WTC11 (cell line): ENCODE measurements at regions of chr2 and their contacts with region 1.

Region 1: DNA sequence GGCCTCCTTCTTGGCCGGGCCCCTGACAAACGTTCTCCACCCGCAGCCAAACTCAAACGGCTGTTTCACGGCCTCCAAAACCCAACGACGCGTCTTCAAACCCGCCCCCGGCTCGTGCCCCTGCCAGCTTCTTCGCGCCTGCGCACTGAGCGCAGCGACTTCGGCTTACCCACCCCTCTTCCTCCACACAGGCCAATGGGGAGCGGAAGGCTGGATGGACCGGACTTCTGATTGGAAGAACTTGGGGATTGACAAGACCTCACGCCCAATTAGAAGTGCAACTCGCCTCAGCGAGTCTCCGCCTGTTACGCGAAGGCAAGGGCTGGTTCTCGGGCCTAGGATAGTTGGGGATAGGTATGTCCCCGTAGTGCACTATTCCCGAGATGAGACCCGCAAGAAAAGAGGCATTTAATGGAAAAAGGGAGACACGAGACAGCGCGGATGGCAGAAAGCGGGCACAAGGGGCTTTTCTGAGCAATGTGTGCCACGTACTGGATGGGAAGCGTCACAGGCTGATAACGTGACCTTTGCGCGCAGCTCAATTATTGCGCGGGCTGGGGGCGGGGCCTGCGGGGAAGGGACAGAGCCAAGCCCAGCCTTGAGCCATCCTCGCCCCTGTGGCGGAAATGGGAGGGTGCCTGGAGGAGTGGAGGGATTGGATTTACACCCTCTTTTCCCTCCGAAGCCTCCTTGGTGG is at the start of gene LAPTM4A:
- DNase-seq: peak; percentile 98
- ATAC-seq: peak; percentile 97
- H3K4me3 Mint-ChIP-seq: no peak within 1 kb of the TSS
- H3K27ac Mint-ChIP-seq: no peak within 1 kb of the TSS; the same call in 1 of the 2 replicates
- H3K4me1 Mint-ChIP-seq: peaks cover 25% of the 10 kb centered on the region
- H3K27me3 Mint-ChIP-seq: peaks cover 7% of the 10 kb centered on the region
- CTCF ChIP-seq: no peak
- total RNA-seq, gene LAPTM4A: 163 to 166 TPM (median 165 TPM) in 3 replicates

Region 2: GRCh38 chr2:19989681-19990415 is 61.8 kb before region 1 on chr2 and contains the start of gene WDR35:
- CTCF ChIA-PET with region 1: interaction called, 4 read pairs
- POLR2A ChIA-PET with region 1: interaction called, 14 read pairs
- DNase-seq: peak; percentile 96
- ATAC-seq: peak; percentile 95
- H3K4me3 Mint-ChIP-seq: peak within 1 kb of the TSS; percentile 92
- H3K27ac Mint-ChIP-seq: peak within 1 kb of the TSS; percentile 93
- H3K4me1 Mint-ChIP-seq: peaks cover 26% of the 10 kb centered on the region
- H3K27me3 Mint-ChIP-seq: peaks cover 2% of the 10 kb centered on the region; the same call in 1 of the 2 replicates
- CTCF ChIP-seq: no peak
- total RNA-seq, gene WDR35: 15.4 to 16.5 TPM (median 15.5 TPM) in 3 replicates

Region 3: DNA sequence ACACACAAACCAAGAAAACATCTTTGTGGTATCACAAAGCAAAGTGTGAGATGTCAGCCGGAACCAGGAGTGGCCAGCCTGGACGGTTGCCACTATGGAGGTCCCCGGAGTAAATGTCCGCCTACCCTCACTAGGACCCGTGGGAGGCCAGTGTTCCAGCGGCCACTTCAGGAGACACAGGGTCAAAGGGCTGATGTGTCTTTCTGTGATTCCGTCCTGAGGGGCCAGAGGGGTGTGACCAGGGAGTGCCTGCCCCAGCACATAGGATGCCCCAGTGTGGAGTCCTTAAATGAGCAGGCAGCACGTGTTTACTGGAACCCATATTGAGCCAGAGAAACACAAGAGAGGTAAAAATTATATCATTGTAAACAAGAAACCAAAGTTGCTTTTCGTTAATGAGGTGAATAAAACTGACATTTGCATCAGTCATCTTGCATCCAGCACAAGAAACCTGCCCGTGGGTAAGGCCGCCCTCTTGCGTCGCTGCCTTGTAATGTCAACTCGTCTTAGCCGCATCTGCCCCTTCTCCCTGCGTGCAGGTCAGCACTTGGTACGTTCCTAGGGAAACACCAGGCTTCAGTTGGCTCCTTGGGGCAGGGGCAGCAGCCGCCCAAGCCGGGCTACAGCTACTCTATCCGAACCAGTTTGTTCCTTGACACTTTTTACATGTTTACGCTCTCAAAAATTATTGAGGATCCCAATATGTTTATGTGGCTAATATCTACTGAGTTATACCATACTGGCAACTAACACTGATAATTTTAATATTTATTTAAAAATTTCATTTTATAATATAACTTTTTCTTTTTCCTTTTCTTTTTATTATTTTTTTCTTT is 46.4 kb after region 1 on chr2:
- CTCF ChIA-PET with region 1: interaction called, 10 read pairs
- POLR2A ChIA-PET with region 1: interaction called, 3 read pairs
- DNase-seq: peak; percentile 88
- ATAC-seq: peak; percentile 89
- H3K4me3 Mint-ChIP-seq: no peak overlapping the region
- H3K27ac Mint-ChIP-seq: no peak overlapping the region
- H3K4me1 Mint-ChIP-seq: peaks cover 17% of the 10 kb centered on the region
- H3K27me3 Mint-ChIP-seq: peaks cover 10% of the 10 kb centered on the region
- CTCF ChIP-seq: peak; percentile 66

Region 4: GRCh38 chr2:20196554-20197161 is 145.0 kb after region 1 on chr2:
- CTCF ChIA-PET with region 1: no interaction called
- POLR2A ChIA-PET with region 1: no interaction called
- DNase-seq: no peak
- ATAC-seq: no peak
- H3K4me3 Mint-ChIP-seq: no peak overlapping the region
- H3K27ac Mint-ChIP-seq: no peak overlapping the region
- H3K4me1 Mint-ChIP-seq: peaks cover 4% of the 10 kb centered on the region
- H3K27me3 Mint-ChIP-seq: no peaks in the 10 kb centered on the region
- CTCF ChIP-seq: no peak

Region 5: GRCh38 chr2:20450204-20450999 is 398.7 kb after region 1 on chr2:
- CTCF ChIA-PET with region 1: no interaction called
- POLR2A ChIA-PET with region 1: no interaction called
- DNase-seq: peak; percentile 14
- ATAC-seq: no peak
- H3K4me3 Mint-ChIP-seq: no peak overlapping the region
- H3K27ac Mint-ChIP-seq: no peak overlapping the region
- H3K4me1 Mint-ChIP-seq: peaks cover 26% of the 10 kb centered on the region
- H3K27me3 Mint-ChIP-seq: peaks cover 71% of the 10 kb centered on the region
- CTCF ChIP-seq: no peak